ENCODE measurements at regions of chr3 and their contacts with region 1.

Region 1: GRCh38 chr3:159839561-159840379 is 148.9 kb upstream of the IL12A start:
- DNase-seq: peak; percentile 57 to 76
- H3K4me3 ChIP-seq: peak within 1 kb of the TSS; percentile 77 to 84 (median 80)
- H3K27ac ChIP-seq: peak within 1 kb of the TSS; percentile 93
- H3K4me1 ChIP-seq: peaks cover 0 to 8% (median 0%) of the 10 kb centered on the region in 4 experiments; a peak in 1 of 7 replicates
- H3K27me3 ChIP-seq: no peaks in the 10 kb centered on the region
- CTCF ChIP-seq: peak in 1 of 3 experiments; percentile 9; a peak in 1 of 4 replicates
- EP300 ChIP-seq: no peak
- POLR2A ChIP-seq: peak; percentile 88 to 89
- RAD21 ChIP-seq: no peak; a peak in 1 of 4 replicates

Region 2: GRCh38 chr3:159828542-159828943 is 11.2 kb before region 1 on chr3:
- CTCF ChIA-PET with region 1: interaction called, 23 read pairs
- POLR2A ChIA-PET with region 1: interaction called, 11 read pairs
- DNase-seq: no peak
- H3K4me3 ChIP-seq: no peak overlapping the region
- H3K27ac ChIP-seq: no peak overlapping the region
- H3K4me1 ChIP-seq: no peaks in the 10 kb centered on the region
- H3K27me3 ChIP-seq: no peaks in the 10 kb centered on the region
- CTCF ChIP-seq: peak in 2 of 3 experiments; percentile 33 to 38; a peak in 2 of 4 replicates
- EP300 ChIP-seq: no peak
- POLR2A ChIP-seq: no peak
- RAD21 ChIP-seq: peak; percentile 56 to 62

Region 3: GRCh38 chr3:159852821-159853505 is 13.2 kb after region 1 on chr3:
- CTCF ChIA-PET with region 1: interaction called, 5 read pairs
- POLR2A ChIA-PET with region 1: interaction called, 23 read pairs
- DNase-seq: no peak
- H3K4me3 ChIP-seq: peak overlapping the region in 1 of 4 experiments; percentile 1; a peak in 1 of 8 replicates
- H3K27ac ChIP-seq: peak overlapping the region; percentile 51; the same call in 1 of the 2 replicates
- H3K4me1 ChIP-seq: peaks cover 0 to 10% (median 6%) of the 10 kb centered on the region in 4 experiments; a peak in 5 of 7 replicates
- H3K27me3 ChIP-seq: no peaks in the 10 kb centered on the region
- CTCF ChIP-seq: no peak
- EP300 ChIP-seq: no peak
- POLR2A ChIP-seq: 0 out of 3 replicates have a peak, but pooled peaks of 1 of the 2 experiments have one; percentile 28
- RAD21 ChIP-seq: no peak

Region 4: DNA sequence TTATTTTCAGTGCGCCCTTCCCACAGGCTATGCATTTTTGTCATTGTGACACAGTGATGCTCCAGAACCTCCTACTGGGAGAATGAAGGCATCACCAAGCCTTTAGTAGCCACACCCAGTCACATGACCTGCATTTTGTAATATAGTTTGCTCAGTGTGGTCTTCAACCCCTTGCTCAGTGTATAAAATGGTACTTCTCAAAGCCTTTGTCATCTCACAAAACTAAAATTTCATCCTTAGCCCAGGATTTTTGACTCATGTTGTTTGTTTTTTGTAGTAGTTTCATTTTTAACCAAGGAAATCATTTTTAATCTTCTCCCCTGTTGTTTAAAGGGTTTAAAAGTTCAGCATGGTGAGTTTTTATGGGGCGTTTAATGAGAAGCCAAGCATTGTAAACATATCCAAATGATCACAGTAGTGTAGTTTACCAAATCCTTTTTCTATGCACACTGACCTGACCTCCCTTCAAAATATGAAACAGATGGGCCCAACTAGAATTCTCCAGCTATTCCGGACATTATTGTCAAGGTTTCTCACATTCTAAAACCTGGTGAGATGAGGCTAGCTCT is 25.3 kb after region 1 on chr3:
- CTCF ChIA-PET with region 1: interaction called, 11 read pairs
- POLR2A ChIA-PET with region 1: no interaction called
- DNase-seq: no peak
- H3K4me3 ChIP-seq: no peak overlapping the region
- H3K27ac ChIP-seq: no peak overlapping the region
- H3K4me1 ChIP-seq: peaks cover 0 to 6% (median 4%) of the 10 kb centered on the region in 4 experiments; a peak in 3 of 7 replicates
- H3K27me3 ChIP-seq: no peaks in the 10 kb centered on the region
- CTCF ChIP-seq: no peak
- EP300 ChIP-seq: no peak
- POLR2A ChIP-seq: no peak
- RAD21 ChIP-seq: no peak

Measured in H1 (cell line).